Prostate gland (tissue), 2 donors: ENCODE measurements at regions of chr10 and their contacts with region 1.

Region 1: GRCh38 chr10:14959276-14960057 is at the start of gene MEIG1:
- DNase-seq: peak; percentile 93
- H3K4me3 ChIP-seq: peak within 1 kb of the TSS; percentile 64 to 76
- H3K27ac ChIP-seq: peak within 1 kb of the TSS; percentile 96 to 97
- H3K4me1 ChIP-seq: no peaks in the 10 kb centered on the region
- H3K27me3 ChIP-seq: no peaks in the 10 kb centered on the region
- CTCF ChIP-seq: peak in 1 of 4 experiments; percentile 12
- POLR2A ChIP-seq: peak; percentile 7
- total RNA-seq, gene MEIG1: 1.7 TPM in 1 of 2 donors, not detected in the other

Region 2: DNA sequence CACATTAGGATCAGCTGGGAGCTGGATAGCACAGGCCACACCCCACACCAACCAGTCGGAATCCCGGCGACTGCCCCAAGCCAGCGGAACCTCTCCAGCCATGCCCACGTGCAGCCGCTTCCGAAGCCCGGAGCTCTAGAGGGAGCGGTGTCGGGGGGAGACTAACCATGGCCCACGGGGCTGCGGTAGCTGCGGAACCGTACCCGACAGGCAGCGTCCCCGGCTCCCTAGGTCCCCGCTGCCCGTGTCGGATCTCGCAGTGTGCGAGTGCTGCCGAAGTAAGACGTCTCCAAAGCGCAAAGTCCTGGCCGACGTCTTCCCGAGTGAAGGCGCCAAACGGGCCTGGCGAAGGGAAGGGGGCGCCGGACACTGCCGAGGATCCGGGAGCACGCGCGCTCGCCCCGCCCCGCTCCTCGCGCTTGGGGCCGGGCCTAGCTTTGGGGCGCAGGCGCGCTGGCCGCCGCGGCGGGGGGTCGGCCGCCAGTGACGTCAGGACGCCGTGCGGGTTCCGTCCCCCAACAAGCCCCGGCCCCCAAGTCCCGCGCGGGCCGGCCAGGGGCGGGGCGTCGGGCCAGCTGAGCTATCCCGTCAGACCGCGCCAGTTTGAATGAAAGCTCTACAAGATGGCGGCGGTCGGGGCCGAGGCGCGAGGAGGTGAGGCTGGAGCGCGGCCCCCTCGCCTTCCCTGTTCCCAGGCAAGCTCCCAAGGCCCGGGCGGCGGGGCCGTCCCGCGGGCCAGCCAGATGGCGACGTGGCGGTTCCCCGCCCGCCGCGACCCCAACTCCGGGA is 81.0 kb before region 1 on chr10 and contains the start of gene SUV39H2:
- intact Hi-C with region 1: loop called (anchors 5 kb)
- DNase-seq: peak; percentile 96
- H3K4me3 ChIP-seq: peak within 1 kb of the TSS; percentile 97
- H3K27ac ChIP-seq: peak within 1 kb of the TSS; percentile 97 to 98
- H3K4me1 ChIP-seq: no peaks in the 10 kb centered on the region
- H3K27me3 ChIP-seq: no peaks in the 10 kb centered on the region
- CTCF ChIP-seq: peak in 2 of 4 experiments; percentile 32
- POLR2A ChIP-seq: peak; percentile 80
- total RNA-seq, gene SUV39H2: 13.2 to 15.3 TPM

Region 3: DNA sequence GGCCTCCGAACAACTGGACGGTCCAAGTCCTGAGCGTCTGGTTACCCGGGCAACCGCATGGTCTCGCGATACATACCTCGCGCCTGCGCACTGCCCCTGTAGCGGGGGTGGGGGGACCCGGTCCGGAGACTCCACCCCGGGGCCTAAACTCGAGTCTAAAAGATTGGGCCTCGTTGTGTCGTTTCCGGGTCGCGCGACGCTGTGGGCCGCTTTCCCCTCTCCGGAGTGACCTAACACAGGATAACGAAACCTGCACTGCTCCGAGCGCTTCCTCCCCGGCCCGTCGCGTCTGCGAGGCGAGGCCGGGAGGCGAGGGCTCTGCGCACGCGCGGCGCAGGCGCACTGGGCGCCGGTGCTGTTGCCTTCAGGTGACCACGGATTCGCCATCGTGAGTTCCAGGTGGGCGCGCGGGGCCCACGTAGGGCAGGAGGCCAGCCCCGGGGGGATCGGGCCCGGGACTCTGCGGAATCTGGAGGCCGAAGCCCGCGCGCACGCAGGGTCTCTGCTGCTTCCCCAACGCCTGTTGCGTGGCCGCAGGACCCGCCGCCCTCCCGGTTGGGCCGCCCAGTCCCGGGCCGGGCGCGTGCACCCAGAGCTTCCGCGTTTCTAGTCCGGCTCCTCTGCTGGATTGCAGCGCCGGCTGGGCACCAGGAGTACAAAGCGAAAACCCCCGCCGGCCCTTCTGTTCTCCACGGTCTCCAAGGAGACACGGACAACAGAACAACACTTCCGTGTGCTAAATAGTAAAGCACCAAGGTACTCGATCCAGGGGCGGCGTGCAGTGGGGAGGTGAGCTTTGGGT is 137.7 kb after region 1 on chr10 and contains the start of gene RPP38:
- intact Hi-C with region 1: loop called (anchors 5 kb)
- DNase-seq: peak; percentile 94
- H3K4me3 ChIP-seq: peak within 1 kb of the TSS; percentile 85 to 86
- H3K27ac ChIP-seq: peak within 1 kb of the TSS; percentile 90 to 92
- H3K4me1 ChIP-seq: no peaks in the 10 kb centered on the region
- H3K27me3 ChIP-seq: no peaks in the 10 kb centered on the region
- CTCF ChIP-seq: peak in 1 of 4 experiments; percentile 17
- POLR2A ChIP-seq: peak; percentile 59
- total RNA-seq, gene RPP38: 17.5 to 20.9 TPM